GM13976 (cell line): ENCODE measurements at regions of chr5 and their contacts with region 1.

Region 1: GRCh38 chr5:93611976-93612854 is 29.2 kb downstream of the NR2F1 start:
- DNase-seq: no peak
- CTCF ChIP-seq: no peak

Region 2: GRCh38 chr5:93078082-93079038 is 533.9 kb before region 1 on chr5:
- in situ Hi-C with region 1: no loop called
- DNase-seq: no peak
- CTCF ChIP-seq: no peak

Region 3: GRCh38 chr5:93789173-93790070 is 177.2 kb after region 1 on chr5:
- in situ Hi-C with region 1: loop called (anchors 10 kb)
- DNase-seq: no peak
- CTCF ChIP-seq: no peak

Region 4: GRCh38 chr5:93899026-93899600 is 286.9 kb after region 1 on chr5:
- in situ Hi-C with region 1: no loop called
- DNase-seq: peak; percentile 3
- CTCF ChIP-seq: peak; percentile 24

Region 5: DNA sequence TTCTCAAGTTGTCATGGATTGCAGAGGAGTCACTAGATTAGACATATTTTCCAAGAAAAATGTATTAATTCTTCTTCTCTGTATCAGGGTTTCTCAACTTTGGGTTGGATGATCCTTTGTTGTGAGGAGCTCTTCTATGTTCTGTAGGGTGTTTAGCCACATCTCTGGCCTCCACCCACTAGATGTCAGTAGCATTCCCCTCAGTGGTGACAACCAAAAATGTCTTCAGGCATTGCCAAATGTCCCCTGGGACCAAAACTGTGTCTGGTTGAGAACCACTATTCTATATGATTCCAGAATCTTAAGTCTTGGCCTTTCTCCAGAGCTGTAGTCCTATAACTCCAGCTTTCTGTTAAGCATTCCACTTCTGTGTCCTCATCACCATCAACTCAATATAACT is 785.3 kb after region 1 on chr5:
- in situ Hi-C with region 1: no loop called
- DNase-seq: no peak
- CTCF ChIP-seq: no peak